Activated CD4-positive, alpha-beta T cell treated with anti-CD3 and anti-CD28 coated beads for 36 hours (primary cell): ENCODE measurements at regions of chr12 and their contacts with region 1.

Region 1: GRCh38 chr12:114662512-114663177 is 21.3 kb downstream of the TBX3 start:
- DNase-seq: peak; percentile 84
- ATAC-seq: peak; percentile 42
- H3K4me3 Mint-ChIP-seq: no peak overlapping the region
- H3K27ac Mint-ChIP-seq: no peak overlapping the region
- H3K4me1 Mint-ChIP-seq: no peaks in the 10 kb centered on the region
- H3K27me3 Mint-ChIP-seq: peaks cover 40% of the 10 kb centered on the region

Region 2: DNA sequence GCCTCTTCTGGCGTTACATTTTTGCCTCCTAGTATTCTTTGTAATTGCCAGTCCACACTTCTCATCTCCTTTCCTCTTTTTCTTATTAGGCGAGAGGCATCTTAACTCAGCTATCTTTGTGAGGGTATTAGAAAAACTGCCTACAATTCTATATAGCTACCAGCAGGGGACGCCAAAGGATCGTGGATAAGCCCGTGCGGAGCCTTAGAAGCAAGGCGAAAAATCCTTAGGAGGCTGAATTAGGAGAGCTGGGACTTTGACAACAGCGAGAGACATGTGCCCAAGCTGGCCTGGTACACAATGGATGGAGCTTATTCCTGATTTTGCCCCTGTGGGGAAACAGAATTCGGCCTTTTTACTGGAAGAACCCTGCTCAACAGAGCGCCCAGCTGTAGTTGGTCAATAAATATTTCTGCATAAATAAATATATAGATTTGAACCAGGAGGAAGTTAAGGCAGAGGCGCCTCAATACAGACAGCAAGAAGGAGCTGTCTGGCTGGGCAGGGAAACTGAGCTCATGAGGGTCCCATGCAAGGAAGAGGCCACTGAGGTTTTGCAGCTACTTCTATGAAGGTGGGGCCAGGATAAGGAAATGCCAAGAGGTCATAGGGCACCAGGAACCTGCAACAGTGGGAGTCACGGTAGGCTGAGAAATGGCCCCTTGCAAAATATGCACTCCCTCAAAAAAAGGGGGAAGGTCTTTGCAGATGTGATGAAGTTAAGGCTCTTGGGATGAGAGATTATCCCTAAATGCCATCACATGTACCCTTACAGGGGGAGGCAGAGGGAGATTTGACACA is 681.9 kb before region 1 on chr12:
- CTCF ChIA-PET with region 1: interaction called, 9 read pairs
- POLR2A ChIA-PET with region 1: interaction called, 3 read pairs
- intact Hi-C with region 1: loop called in 1 of 2 experiments (anchors 2 kb)
- DNase-seq: peak; percentile 62
- ATAC-seq: peak; percentile 69
- H3K4me3 Mint-ChIP-seq: no peak overlapping the region
- H3K27ac Mint-ChIP-seq: no peak overlapping the region
- H3K4me1 Mint-ChIP-seq: no peaks in the 10 kb centered on the region
- H3K27me3 Mint-ChIP-seq: peaks cover 10% of the 10 kb centered on the region

Region 3: GRCh38 chr12:114316076-114316475 is 346.6 kb before region 1 on chr12:
- CTCF ChIA-PET with region 1: no interaction called
- POLR2A ChIA-PET with region 1: no interaction called
- intact Hi-C with region 1: no loop called
- DNase-seq: no peak
- ATAC-seq: no peak
- H3K4me3 Mint-ChIP-seq: no peak overlapping the region
- H3K27ac Mint-ChIP-seq: no peak overlapping the region
- H3K4me1 Mint-ChIP-seq: no peaks in the 10 kb centered on the region
- H3K27me3 Mint-ChIP-seq: peaks cover 2% of the 10 kb centered on the region

Region 4: DNA sequence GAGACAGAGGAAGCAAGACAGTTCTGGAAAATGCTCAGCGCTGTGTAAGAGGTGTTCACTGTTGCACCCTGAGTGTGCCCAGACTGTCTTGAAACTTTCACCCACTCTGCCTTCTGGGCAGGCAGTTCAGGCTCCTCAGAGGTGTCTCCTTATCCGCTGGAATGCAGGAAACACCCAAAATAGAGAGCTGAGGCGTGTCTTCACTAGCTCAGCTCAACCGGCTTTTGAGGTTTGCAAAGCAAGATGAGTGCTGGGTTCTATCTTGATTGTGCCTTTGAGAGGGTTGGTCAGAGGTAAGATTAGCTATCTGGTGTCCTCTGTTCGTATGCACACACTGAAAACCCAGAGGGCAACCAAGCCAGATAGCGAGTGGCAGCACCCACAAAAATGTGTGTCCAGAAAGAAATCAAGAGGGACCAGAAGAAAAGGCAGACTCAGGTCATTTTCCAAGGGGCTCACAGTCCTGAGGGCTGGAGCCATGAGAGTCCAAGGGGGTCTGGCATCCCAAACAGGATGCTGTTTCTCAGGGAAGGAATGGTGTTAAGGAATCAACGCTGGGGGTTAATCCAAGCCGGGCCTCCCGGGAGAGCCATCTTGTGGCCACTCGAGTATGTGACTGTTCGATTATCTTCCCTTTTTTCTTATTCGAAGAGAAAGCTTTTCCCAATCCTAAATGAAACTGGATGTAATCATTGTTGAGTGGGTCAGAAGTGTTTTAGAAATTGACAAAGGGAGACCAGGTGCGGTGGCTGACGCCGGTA is 25.7 kb before region 1 on chr12:
- CTCF ChIA-PET with region 1: no interaction called
- POLR2A ChIA-PET with region 1: no interaction called
- intact Hi-C with region 1: no loop called
- DNase-seq: no peak
- ATAC-seq: no peak
- H3K4me3 Mint-ChIP-seq: no peak overlapping the region
- H3K27ac Mint-ChIP-seq: no peak overlapping the region
- H3K4me1 Mint-ChIP-seq: no peaks in the 10 kb centered on the region
- H3K27me3 Mint-ChIP-seq: peaks cover 4% of the 10 kb centered on the region

Region 5: GRCh38 chr12:114684098-114684869 is 21.6 kb after region 1 on chr12 and contains the start of gene TBX3:
- CTCF ChIA-PET with region 1: interaction called, 4 read pairs
- POLR2A ChIA-PET with region 1: no interaction called
- intact Hi-C with region 1: loop called in 1 of 2 experiments (anchors 2 kb)
- DNase-seq: peak; percentile 86
- ATAC-seq: peak; percentile 94
- H3K4me3 Mint-ChIP-seq: peak within 1 kb of the TSS; percentile 71
- H3K27ac Mint-ChIP-seq: peak within 1 kb of the TSS; percentile 33
- H3K4me1 Mint-ChIP-seq: peaks cover 38% of the 10 kb centered on the region
- H3K27me3 Mint-ChIP-seq: peaks cover 90% of the 10 kb centered on the region
- total RNA-seq, gene TBX3: not detected

Region 6: DNA sequence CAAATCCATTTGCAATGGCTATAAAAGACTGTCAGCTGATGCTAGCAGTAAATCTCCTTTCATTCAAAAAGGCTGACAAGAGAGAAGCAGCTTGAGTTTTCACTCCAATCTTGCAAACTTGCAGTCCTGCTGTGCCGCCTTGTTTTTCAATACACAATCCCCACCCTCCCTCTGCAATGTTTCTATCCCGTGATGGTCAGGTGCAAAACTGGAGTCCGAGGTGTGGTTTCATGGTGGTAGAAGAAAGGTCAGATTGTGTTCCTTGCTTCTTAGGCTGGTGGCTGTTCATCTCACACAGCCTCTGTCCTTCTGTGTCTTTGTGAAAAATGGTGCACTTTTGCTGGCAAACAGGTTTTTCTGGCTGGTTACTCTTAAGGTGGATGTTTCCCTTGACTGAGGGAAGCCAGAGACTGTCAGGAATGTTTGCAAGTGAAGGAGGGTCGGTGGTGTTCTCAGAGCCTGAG is 49.1 kb after region 1 on chr12:
- CTCF ChIA-PET with region 1: no interaction called
- POLR2A ChIA-PET with region 1: no interaction called
- intact Hi-C with region 1: no loop called
- DNase-seq: no peak
- ATAC-seq: no peak
- H3K4me3 Mint-ChIP-seq: no peak overlapping the region
- H3K27ac Mint-ChIP-seq: no peak overlapping the region
- H3K4me1 Mint-ChIP-seq: no peaks in the 10 kb centered on the region
- H3K27me3 Mint-ChIP-seq: peaks cover 12% of the 10 kb centered on the region

Region 7: GRCh38 chr12:115752913-115753726 is 1090.5 kb after region 1 on chr12:
- CTCF ChIA-PET with region 1: no interaction called
- POLR2A ChIA-PET with region 1: no interaction called
- intact Hi-C with region 1: loop called (anchors 1 to 2 kb)
- DNase-seq: peak; percentile 11
- ATAC-seq: no peak
- H3K4me3 Mint-ChIP-seq: no peak overlapping the region
- H3K27ac Mint-ChIP-seq: no peak overlapping the region
- H3K4me1 Mint-ChIP-seq: no peaks in the 10 kb centered on the region
- H3K27me3 Mint-ChIP-seq: peaks cover 15% of the 10 kb centered on the region